ENCODE measurements at regions of chr15 and their contacts with region 1.

Region 1: DNA sequence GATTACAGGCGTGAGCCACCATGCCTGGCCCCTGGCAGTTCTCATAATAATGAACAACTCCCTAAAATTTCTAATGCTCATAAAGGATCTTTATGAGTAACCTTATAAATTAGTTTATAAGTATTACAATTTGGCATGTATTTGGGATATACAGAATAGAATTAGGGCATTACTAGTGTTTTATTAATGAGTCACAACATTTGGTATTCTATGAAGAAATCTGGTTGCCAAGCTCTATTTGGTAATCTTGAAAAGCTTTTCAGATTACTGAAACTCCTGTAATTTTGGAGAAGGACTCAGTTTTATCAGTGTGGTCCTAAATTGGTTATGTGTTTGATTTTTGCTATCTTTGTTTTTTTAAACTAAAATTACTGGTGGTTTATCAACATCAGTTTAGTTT is 45.8 kb downstream of the TM6SF1 start:
- DNase-seq: no peak
- H3K4me3 ChIP-seq: no peak overlapping the region
- H3K27ac ChIP-seq: no peak overlapping the region
- H3K4me1 ChIP-seq: no peaks in the 10 kb centered on the region
- H3K27me3 ChIP-seq: no peaks in the 10 kb centered on the region
- CTCF ChIP-seq: no peak
- EP300 ChIP-seq: no peak
- POLR2A ChIP-seq: no peak

Region 2: GRCh38 chr15:83192742-83193141 is 39.5 kb after region 1 on chr15:
- intact Hi-C with region 1: loop called in 1 of 4 experiments (anchors 1 kb)
- DNase-seq: no peak
- H3K4me3 ChIP-seq: no peak overlapping the region
- H3K27ac ChIP-seq: no peak overlapping the region
- H3K4me1 ChIP-seq: peaks cover 5% of the 10 kb centered on the region
- H3K27me3 ChIP-seq: no peaks in the 10 kb centered on the region
- CTCF ChIP-seq: no peak
- EP300 ChIP-seq: no peak
- POLR2A ChIP-seq: no peak